Activated naive CD4-positive, alpha-beta T cell treated with anti-CD3 and anti-CD28 coated beads for 36 hours (primary cell): ENCODE measurements at regions of chr6 and their contacts with region 1.

Region 1: DNA sequence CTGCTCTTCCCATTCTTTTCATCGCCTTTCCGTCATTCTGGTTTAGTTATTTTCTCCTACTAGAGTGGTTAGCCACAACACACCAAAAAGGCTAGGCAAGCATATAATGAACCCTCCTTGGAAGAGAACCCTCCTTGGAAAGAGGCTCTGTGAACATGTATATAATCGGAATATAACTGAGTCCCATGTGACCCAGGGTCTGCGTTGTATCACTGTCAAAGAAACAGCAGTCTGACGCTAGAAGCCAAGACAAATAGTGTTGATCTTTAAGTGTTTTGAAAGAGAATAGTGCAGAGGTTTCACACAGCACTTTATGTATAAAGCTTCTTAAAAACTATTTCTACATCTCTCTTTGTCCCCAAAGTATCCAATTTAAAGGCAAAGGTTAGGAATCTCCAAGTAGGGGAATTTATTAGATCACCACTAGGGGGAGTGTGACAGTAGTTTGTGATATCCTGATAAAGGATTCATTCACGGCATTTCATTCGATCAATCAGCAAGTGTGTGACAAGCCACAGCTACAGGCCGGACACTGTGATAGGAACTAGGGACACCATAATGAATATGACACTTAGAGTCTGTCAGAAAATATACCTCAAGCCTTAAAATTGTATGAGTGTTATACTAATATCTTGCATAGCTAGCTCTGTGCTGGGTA is 395.3 kb downstream of the CD109 start:
- DNase-seq: no peak
- H3K4me3 Mint-ChIP-seq: no peak overlapping the region
- H3K27ac Mint-ChIP-seq: no peak overlapping the region
- H3K4me1 Mint-ChIP-seq: no peaks in the 10 kb centered on the region
- H3K27me3 Mint-ChIP-seq: peaks cover 2% of the 10 kb centered on the region

Region 2: DNA sequence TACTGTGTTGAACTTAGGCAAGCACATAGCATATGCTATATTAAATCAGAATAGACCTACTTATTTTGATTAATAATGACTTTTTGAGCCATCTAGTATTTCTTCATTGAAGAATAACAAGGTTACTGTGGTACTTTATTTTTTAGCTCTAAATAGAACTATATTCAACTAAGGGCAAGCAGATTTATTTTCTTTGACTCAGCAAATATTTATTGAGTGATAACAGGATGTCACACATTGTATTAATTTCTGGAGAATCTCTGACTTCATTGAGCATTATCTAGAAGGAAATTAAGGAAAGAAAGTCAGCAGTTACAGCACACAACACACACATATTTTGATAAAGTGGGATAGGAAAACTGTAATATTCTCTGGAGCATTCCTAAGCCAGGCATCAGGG is 12.2 kb after region 1 on chr6:
- CTCF ChIA-PET with region 1: interaction called, 13 read pairs
- intact Hi-C with region 1: no loop called
- DNase-seq: no peak
- H3K4me3 Mint-ChIP-seq: no peak overlapping the region
- H3K27ac Mint-ChIP-seq: no peak overlapping the region
- H3K4me1 Mint-ChIP-seq: no peaks in the 10 kb centered on the region
- H3K27me3 Mint-ChIP-seq: no peaks in the 10 kb centered on the region